ENCODE measurements at regions of chr2 and their contacts with region 1.

Region 1: DNA sequence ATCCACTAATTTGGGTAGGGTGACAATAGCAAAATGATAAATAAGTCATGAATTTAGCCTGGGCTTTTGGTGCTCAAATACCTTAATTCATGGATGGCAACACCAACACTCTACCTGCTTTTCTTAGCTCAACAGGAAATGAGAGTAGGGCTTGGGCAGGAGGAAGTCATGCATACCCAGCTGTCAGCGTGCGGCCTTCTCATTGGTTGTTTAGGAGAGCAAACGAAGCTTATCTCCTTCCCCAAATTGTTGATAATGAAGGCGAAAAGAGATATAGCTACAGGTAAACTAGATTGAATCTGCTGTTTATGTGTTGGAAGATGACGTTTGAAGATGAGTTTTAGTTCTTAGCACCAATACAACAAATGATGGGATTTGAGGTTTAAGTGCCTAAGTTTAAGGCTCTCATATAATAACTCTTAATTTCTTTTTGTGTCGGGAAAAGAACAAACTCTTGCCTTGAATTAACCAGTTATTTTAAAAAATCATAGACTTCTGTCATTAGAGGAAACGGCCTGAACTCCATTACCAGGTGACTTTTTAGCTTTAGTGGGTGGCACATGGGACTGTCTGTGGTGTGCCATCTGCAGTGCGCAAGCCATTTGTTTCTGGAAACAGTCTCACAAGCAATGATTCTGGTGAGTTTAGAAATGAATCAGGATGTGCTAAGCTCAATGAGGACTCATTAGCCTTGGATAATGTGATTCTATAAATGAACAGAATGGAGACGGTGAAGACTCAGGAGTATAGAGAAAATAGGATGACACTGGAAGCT is 19.8 kb downstream of the MAP4K4 start:
- DNase-seq: peak in 7 of 9 experiments; percentile 36 to 77 (median 64)
- ATAC-seq: peak; percentile 64
- H3K4me3 ChIP-seq: peak overlapping the region in 1 of 2 experiments; percentile 8
- H3K4me3 Mint-ChIP-seq: peak overlapping the region; percentile 38
- H3K27ac ChIP-seq: peak overlapping the region; percentile 17 to 71
- H3K27ac Mint-ChIP-seq: peak overlapping the region; percentile 95
- H3K4me1 ChIP-seq: peaks cover 95% of the 10 kb centered on the region
- H3K4me1 Mint-ChIP-seq: peaks cover 82% of the 10 kb centered on the region
- H3K27me3 ChIP-seq: no peaks in the 10 kb centered on the region
- H3K27me3 Mint-ChIP-seq: no peaks in the 10 kb centered on the region
- CTCF ChIP-seq: no peak

Region 2: GRCh38 chr2:101746388-101746723 is 29.1 kb after region 1 on chr2:
- CTCF ChIA-PET with region 1: no interaction called
- POLR2A ChIA-PET with region 1: interaction called, 12 read pairs
- intact Hi-C with region 1: no loop called
- DNase-seq: no peak
- ATAC-seq: no peak
- H3K4me3 ChIP-seq: no peak overlapping the region
- H3K4me3 Mint-ChIP-seq: no peak overlapping the region
- H3K27ac ChIP-seq: no peak overlapping the region
- H3K27ac Mint-ChIP-seq: no peak overlapping the region
- H3K4me1 ChIP-seq: peaks cover 59% of the 10 kb centered on the region
- H3K4me1 Mint-ChIP-seq: peaks cover 73% of the 10 kb centered on the region
- H3K27me3 ChIP-seq: no peaks in the 10 kb centered on the region
- H3K27me3 Mint-ChIP-seq: no peaks in the 10 kb centered on the region
- CTCF ChIP-seq: no peak

Measured in CD8-positive, alpha-beta T cell (primary cell).